ENCODE measurements at regions of chr1 and their contacts with region 1.

Region 1: GRCh38 chr1:86741947-86742572 is 37.7 kb downstream of the SH3GLB1 start:
- DNase-seq: peak in 6 of 9 experiments; percentile 11 to 71 (median 48)
- ATAC-seq: no peak
- H3K4me3 ChIP-seq: no peak overlapping the region
- H3K4me3 Mint-ChIP-seq: no peak overlapping the region
- H3K27ac ChIP-seq: no peak overlapping the region
- H3K27ac Mint-ChIP-seq: no peak overlapping the region
- H3K4me1 ChIP-seq: peaks cover 20% of the 10 kb centered on the region
- H3K4me1 Mint-ChIP-seq: peaks cover 4% of the 10 kb centered on the region
- H3K27me3 ChIP-seq: no peaks in the 10 kb centered on the region
- H3K27me3 Mint-ChIP-seq: no peaks in the 10 kb centered on the region
- CTCF ChIP-seq: peak; percentile 83

Region 2: DNA sequence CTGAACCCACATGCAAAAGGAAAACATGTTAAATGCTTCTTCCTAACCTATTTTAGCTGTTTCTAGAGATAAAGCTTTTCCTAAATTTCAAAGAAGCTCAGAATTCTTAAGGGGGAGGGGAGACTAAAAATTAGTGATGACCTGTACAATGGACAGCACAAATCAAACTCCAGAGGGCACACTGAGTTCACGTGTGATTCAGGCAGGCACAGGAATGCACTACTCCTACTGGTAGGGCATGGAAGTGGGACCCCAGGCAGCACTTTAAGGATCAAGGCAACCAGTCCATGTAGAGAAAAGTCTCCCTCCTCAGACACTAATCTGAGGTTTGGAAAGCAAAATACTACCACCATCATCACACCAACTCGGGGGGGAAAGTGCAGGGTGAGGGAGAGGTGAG is 226.5 kb before region 1 on chr1:
- CTCF ChIA-PET with region 1: no interaction called
- POLR2A ChIA-PET with region 1: no interaction called
- intact Hi-C with region 1: loop called in 1 of 2 experiments (anchors 5 kb)
- DNase-seq: peak in 1 of 9 experiments; percentile 27
- ATAC-seq: no peak
- H3K4me3 ChIP-seq: no peak overlapping the region
- H3K4me3 Mint-ChIP-seq: no peak overlapping the region
- H3K27ac ChIP-seq: no peak overlapping the region
- H3K27ac Mint-ChIP-seq: no peak overlapping the region
- H3K4me1 ChIP-seq: no peaks in the 10 kb centered on the region
- H3K4me1 Mint-ChIP-seq: no peaks in the 10 kb centered on the region
- H3K27me3 ChIP-seq: no peaks in the 10 kb centered on the region
- H3K27me3 Mint-ChIP-seq: no peaks in the 10 kb centered on the region
- CTCF ChIP-seq: no peak

Region 3: GRCh38 chr1:86993269-86993985 is 251.4 kb after region 1 on chr1:
- CTCF ChIA-PET with region 1: no interaction called
- POLR2A ChIA-PET with region 1: no interaction called
- intact Hi-C with region 1: no loop called
- DNase-seq: no peak
- ATAC-seq: no peak
- H3K4me3 ChIP-seq: no peak overlapping the region
- H3K4me3 Mint-ChIP-seq: no peak overlapping the region
- H3K27ac ChIP-seq: no peak overlapping the region
- H3K27ac Mint-ChIP-seq: no peak overlapping the region
- H3K4me1 ChIP-seq: no peaks in the 10 kb centered on the region
- H3K4me1 Mint-ChIP-seq: peaks cover 10% of the 10 kb centered on the region
- H3K27me3 ChIP-seq: no peaks in the 10 kb centered on the region
- H3K27me3 Mint-ChIP-seq: no peaks in the 10 kb centered on the region
- CTCF ChIP-seq: no peak